Vagina (tissue), 2 donors: ENCODE measurements at regions of chr2 and their contacts with region 1.

Region 1: GRCh38 chr2:18475884-18476283 is 84.6 kb downstream of the RDH14 start:
- DNase-seq: no peak
- H3K4me3 ChIP-seq: no peak overlapping the region
- H3K27ac ChIP-seq: no peak overlapping the region
- H3K4me1 ChIP-seq: peaks cover 21% of the 10 kb centered on the region
- H3K27me3 ChIP-seq: no peaks in the 10 kb centered on the region
- CTCF ChIP-seq: no peak
- POLR2A ChIP-seq: no peak

Region 2: DNA sequence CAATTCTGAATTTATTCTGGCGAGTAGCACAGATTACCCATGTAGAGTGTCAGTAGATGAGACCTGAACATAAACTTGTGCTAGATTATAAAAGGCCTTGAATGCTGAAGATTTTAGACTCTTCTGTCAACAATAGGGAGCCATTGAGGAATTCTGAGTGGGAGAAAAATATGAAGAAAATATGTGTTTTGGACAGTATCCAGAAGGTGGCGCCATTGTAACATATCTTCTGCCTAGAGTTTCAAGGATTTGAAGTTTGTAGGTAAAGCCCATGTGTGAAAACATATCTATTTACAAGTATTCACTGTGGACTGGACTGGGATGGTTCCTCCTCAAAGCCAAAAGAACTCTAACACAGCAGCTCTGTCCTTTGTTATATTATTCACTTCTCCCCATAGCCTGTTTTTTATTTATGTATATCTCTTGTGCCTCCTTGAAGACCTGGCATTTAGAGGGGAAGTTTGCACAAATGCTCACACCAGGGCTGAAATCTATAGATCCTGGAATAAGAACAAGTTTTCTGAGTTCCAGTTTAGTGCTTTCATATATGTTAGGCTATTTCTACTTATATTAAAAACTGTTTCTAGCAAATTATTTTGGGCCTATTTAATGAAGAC is 40.4 kb before region 1 on chr2:
- intact Hi-C with region 1: loop called (anchors 2 kb)
- DNase-seq: no peak
- H3K4me3 ChIP-seq: no peak overlapping the region
- H3K27ac ChIP-seq: no peak overlapping the region
- H3K4me1 ChIP-seq: peaks cover 8% of the 10 kb centered on the region
- H3K27me3 ChIP-seq: no peaks in the 10 kb centered on the region
- CTCF ChIP-seq: peak in 2 of 3 experiments; percentile 33 to 35
- POLR2A ChIP-seq: no peak

Region 3: GRCh38 chr2:18527326-18527725 is 51.4 kb after region 1 on chr2:
- intact Hi-C with region 1: no loop called
- DNase-seq: no peak
- H3K4me3 ChIP-seq: no peak overlapping the region
- H3K27ac ChIP-seq: no peak overlapping the region
- H3K4me1 ChIP-seq: no peaks in the 10 kb centered on the region
- H3K27me3 ChIP-seq: no peaks in the 10 kb centered on the region
- CTCF ChIP-seq: no peak
- POLR2A ChIP-seq: no peak